A673 (cell line): ENCODE measurements at regions of chr11 and their contacts with region 1.

Region 1: GRCh38 chr11:42524534-42525227 is 787.1 kb upstream of the API5 start:
- DNase-seq: peak; percentile 87
- H3K4me3 ChIP-seq: no peak overlapping the region
- H3K27ac ChIP-seq: no peak overlapping the region
- H3K4me1 ChIP-seq: no peaks in the 10 kb centered on the region
- H3K27me3 ChIP-seq: no peaks in the 10 kb centered on the region
- CTCF ChIP-seq: peak; percentile 99

Region 2: DNA sequence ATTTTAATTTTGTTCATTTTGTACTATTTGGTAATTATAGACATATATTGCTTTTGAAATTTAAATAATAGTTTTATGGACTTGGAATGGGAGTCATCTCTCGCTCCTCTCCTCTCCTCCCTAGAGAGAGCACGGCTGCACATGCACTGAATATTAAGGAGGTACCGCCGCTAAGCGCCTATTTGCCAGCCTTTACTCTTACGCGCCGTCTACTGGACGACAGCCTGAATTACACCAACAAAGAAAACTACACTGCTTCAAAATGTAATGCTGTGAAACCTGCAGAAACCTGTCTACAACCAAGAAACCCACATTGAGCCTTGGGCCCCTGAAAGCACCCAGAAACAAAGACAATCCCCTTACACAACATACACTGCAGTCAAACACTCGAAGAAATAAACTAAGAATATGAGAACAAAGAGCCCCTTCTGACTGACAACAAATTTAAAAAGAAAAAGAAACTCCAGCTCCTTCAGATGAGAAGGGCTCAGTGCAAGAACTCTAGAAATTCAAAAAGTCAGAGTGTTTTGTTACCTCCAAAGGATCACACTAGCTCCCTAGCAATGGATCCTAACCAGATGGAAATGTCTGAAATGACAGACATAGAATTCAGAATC is 1802.4 kb before region 1 on chr11:
- CTCF ChIA-PET with region 1: no interaction called
- POLR2A ChIA-PET with region 1: no interaction called
- intact Hi-C with region 1: loop called (anchors 2 kb)
- DNase-seq: peak; percentile 89
- H3K4me3 ChIP-seq: no peak overlapping the region
- H3K27ac ChIP-seq: no peak overlapping the region
- H3K4me1 ChIP-seq: no peaks in the 10 kb centered on the region
- H3K27me3 ChIP-seq: no peaks in the 10 kb centered on the region
- CTCF ChIP-seq: peak; percentile 99

Region 3: GRCh38 chr11:41206388-41206787 is 1318.3 kb before region 1 on chr11:
- CTCF ChIA-PET with region 1: interaction called, 7 read pairs
- POLR2A ChIA-PET with region 1: no interaction called
- intact Hi-C with region 1: loop called (anchors 5 kb)
- DNase-seq: no peak
- H3K4me3 ChIP-seq: no peak overlapping the region
- H3K27ac ChIP-seq: no peak overlapping the region
- H3K4me1 ChIP-seq: peaks cover 5% of the 10 kb centered on the region
- H3K27me3 ChIP-seq: no peaks in the 10 kb centered on the region
- CTCF ChIP-seq: no peak

Region 4: GRCh38 chr11:41461057-41461681 is 1063.5 kb before region 1 on chr11:
- CTCF ChIA-PET with region 1: interaction called, 6 read pairs
- POLR2A ChIA-PET with region 1: no interaction called
- intact Hi-C with region 1: loop called (anchors 2 kb)
- DNase-seq: peak; percentile 40
- H3K4me3 ChIP-seq: no peak overlapping the region
- H3K27ac ChIP-seq: no peak overlapping the region
- H3K4me1 ChIP-seq: no peaks in the 10 kb centered on the region
- H3K27me3 ChIP-seq: peaks cover 39% of the 10 kb centered on the region
- CTCF ChIP-seq: peak; percentile 97

Region 5: DNA sequence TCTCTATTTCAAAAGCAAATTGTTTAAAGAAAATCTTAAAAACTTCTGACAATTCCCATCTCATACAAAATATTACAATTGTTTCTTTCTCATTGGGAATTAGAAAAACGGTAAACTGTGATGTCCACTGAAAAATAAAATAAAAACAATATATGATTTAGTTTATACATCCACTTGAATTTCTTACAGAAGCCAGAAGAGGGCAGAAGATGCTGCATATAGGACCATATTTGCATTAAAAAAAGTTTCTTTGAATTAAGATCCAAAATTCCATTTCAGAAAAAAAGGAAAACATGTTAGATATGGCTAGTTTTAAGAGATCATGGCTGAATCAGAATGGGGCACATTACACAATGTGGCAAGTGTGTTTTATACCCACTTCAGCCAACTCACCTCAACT is 1026.0 kb before region 1 on chr11:
- CTCF ChIA-PET with region 1: interaction called, 4 read pairs
- POLR2A ChIA-PET with region 1: no interaction called
- intact Hi-C with region 1: loop called (anchors 1 kb)
- DNase-seq: peak; percentile 47
- H3K4me3 ChIP-seq: no peak overlapping the region
- H3K27ac ChIP-seq: no peak overlapping the region
- H3K4me1 ChIP-seq: peaks cover 31% of the 10 kb centered on the region
- H3K27me3 ChIP-seq: no peaks in the 10 kb centered on the region
- CTCF ChIP-seq: peak; percentile 78

Region 6: DNA sequence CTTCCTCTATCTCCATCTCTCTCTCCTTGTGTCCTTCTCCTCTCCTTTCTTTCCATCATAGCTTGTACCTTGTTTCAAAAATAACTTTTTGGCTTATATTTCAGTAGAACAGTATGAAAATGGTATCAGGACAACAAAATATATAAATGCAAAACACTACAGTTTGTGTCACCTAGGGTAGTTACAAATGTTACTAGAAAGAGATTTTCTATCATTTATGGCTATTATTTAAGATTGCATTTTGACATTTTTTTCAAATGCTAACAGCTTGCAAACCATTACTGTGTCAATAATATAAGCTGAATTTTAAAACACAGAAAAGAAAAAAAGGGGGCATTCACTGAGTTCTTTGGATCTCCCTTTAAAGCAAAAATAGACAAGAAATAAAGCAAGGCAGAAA is 672.9 kb before region 1 on chr11:
- CTCF ChIA-PET with region 1: no interaction called
- POLR2A ChIA-PET with region 1: no interaction called
- intact Hi-C with region 1: loop called (anchors 1 kb)
- DNase-seq: no peak
- H3K4me3 ChIP-seq: no peak overlapping the region
- H3K27ac ChIP-seq: peak overlapping the region; percentile 66
- H3K4me1 ChIP-seq: no peaks in the 10 kb centered on the region
- H3K27me3 ChIP-seq: no peaks in the 10 kb centered on the region
- CTCF ChIP-seq: no peak

Region 7: DNA sequence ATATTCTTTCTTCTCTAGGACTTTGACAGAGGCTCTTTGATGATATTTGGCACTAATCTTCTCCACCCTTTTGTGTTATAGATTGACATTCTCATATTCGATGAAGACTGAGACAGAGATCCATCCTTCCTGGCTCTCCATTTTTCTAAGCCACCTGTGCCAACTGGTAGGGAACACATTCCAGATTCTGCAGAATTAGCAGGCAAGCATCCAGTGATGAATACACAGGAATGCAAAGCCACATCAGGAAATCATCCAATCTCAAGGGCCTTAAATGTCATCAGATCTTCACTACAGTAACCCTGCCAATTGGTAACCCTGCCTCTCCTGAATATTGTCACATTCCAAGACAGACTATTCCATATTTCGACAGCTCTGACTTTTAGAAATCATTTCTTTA is 68.8 kb after region 1 on chr11:
- CTCF ChIA-PET with region 1: no interaction called
- POLR2A ChIA-PET with region 1: no interaction called
- intact Hi-C with region 1: no loop called
- DNase-seq: no peak
- H3K4me3 ChIP-seq: no peak overlapping the region
- H3K27ac ChIP-seq: no peak overlapping the region
- H3K4me1 ChIP-seq: no peaks in the 10 kb centered on the region
- H3K27me3 ChIP-seq: no peaks in the 10 kb centered on the region
- CTCF ChIP-seq: no peak

Region 8: DNA sequence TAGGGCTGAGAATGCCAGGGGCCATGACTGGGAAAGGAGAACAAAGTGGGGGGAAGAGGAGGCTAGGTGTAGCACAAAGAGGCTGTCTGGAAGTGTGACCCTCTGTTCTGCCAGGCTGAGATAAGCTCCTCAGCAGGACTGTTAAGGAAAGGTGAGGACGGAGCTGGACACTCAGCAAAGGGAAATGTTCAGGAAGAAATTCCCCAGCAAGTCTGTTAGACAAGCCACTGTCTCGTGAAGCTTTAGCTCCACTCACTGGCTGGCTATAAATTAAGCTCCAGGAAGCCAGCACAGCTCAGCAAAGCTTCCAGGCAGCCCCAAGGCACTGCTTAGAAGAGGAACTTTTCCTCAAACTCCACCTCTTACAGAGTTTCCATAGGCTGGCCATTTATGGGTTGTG is 605.9 kb after region 1 on chr11:
- CTCF ChIA-PET with region 1: interaction called, 6 read pairs
- POLR2A ChIA-PET with region 1: no interaction called
- intact Hi-C with region 1: loop called (anchors 5 kb)
- DNase-seq: peak; percentile 85
- H3K4me3 ChIP-seq: no peak overlapping the region
- H3K27ac ChIP-seq: peak overlapping the region; percentile 21
- H3K4me1 ChIP-seq: peaks cover 10% of the 10 kb centered on the region
- H3K27me3 ChIP-seq: no peaks in the 10 kb centered on the region
- CTCF ChIP-seq: peak; percentile 77